Activated CD4-positive, alpha-beta T cell treated with anti-CD3 and anti-CD28 coated beads for 36 hours (primary cell): ENCODE measurements at regions of chr7 and their contacts with region 1.

Region 1: DNA sequence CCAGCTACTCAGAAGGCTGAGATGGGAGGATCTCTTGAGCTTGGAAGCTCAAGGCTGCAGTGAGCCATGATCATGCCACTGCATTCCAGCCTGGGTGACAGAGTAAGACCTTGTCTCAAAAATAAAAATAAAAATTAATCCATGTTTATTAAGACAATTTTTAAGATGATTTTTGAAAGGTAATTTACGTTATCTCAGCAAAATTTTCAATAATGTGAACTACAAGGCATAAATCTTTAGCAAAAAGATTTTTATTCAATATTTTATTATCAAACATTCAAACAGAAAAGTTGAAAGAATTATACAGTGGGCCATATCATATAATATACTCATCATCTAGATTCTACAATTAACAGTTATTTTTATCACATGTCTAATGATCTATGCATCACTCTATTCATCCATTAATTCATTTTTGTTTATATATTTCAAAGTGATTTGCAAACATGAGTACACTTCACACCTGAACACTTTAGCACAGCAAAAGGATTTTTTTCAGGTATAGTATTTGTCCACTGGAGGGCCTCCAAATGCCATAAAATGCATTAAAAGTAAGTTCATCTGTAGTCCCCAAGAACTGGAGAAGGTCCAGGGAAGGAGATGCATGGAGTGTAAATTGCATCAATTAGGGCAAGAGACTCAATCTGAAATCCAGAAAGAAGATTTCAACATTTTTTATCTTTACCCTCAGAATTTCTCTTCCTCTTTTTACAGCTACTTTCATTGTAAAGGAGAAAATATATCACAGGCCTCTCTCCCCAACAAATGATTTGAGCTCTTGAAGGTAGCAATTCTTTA is 38.6 kb upstream of the RSBN1L start:
- DNase-seq: no peak
- ATAC-seq: peak; percentile 63
- H3K4me3 Mint-ChIP-seq: no peak overlapping the region
- H3K27ac Mint-ChIP-seq: no peak overlapping the region
- H3K4me1 Mint-ChIP-seq: no peaks in the 10 kb centered on the region
- H3K27me3 Mint-ChIP-seq: no peaks in the 10 kb centered on the region

Region 2: GRCh38 chr7:77759294-77759889 is 101.8 kb after region 1 on chr7:
- CTCF ChIA-PET with region 1: interaction called, 70 read pairs
- POLR2A ChIA-PET with region 1: no interaction called
- intact Hi-C with region 1: loop called (anchors 1 kb)
- DNase-seq: peak; percentile 78
- ATAC-seq: peak; percentile 81
- H3K4me3 Mint-ChIP-seq: no peak overlapping the region
- H3K27ac Mint-ChIP-seq: no peak overlapping the region
- H3K4me1 Mint-ChIP-seq: peaks cover 31% of the 10 kb centered on the region
- H3K27me3 Mint-ChIP-seq: no peaks in the 10 kb centered on the region

Region 3: DNA sequence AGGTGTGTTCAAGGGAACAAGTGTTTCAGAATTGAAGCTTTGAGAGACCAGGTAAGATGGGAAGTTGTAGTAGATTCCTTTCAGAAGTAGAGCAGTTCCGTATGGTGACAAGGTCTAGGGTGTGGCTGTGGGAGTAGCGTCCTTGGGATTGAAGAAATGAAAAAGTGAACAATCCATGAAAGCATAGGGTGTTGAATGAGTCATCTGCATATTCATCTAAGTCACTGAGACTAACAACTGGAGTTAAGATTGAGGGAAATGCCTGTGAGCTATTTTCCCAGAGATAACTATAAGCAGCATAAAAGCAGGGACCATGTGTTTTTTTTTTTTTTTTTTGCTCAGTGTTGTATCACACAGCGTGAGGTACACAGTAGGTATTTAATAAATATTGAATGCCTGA is 275.8 kb after region 1 on chr7:
- CTCF ChIA-PET with region 1: interaction called, 3 read pairs
- POLR2A ChIA-PET with region 1: no interaction called
- intact Hi-C with region 1: loop called in 1 of 2 experiments (anchors 5 kb)
- DNase-seq: no peak
- ATAC-seq: peak; percentile 47
- H3K4me3 Mint-ChIP-seq: no peak overlapping the region
- H3K27ac Mint-ChIP-seq: no peak overlapping the region
- H3K4me1 Mint-ChIP-seq: peaks cover 11% of the 10 kb centered on the region
- H3K27me3 Mint-ChIP-seq: no peaks in the 10 kb centered on the region

Region 4: GRCh38 chr7:78039790-78040776 is 382.5 kb after region 1 on chr7:
- CTCF ChIA-PET with region 1: interaction called, 22 read pairs
- POLR2A ChIA-PET with region 1: no interaction called
- intact Hi-C with region 1: loop called (anchors 2 to 5 kb)
- DNase-seq: peak; percentile 72
- ATAC-seq: peak; percentile 92
- H3K4me3 Mint-ChIP-seq: no peak overlapping the region
- H3K27ac Mint-ChIP-seq: no peak overlapping the region
- H3K4me1 Mint-ChIP-seq: no peaks in the 10 kb centered on the region
- H3K27me3 Mint-ChIP-seq: peaks cover 18% of the 10 kb centered on the region

Region 5: DNA sequence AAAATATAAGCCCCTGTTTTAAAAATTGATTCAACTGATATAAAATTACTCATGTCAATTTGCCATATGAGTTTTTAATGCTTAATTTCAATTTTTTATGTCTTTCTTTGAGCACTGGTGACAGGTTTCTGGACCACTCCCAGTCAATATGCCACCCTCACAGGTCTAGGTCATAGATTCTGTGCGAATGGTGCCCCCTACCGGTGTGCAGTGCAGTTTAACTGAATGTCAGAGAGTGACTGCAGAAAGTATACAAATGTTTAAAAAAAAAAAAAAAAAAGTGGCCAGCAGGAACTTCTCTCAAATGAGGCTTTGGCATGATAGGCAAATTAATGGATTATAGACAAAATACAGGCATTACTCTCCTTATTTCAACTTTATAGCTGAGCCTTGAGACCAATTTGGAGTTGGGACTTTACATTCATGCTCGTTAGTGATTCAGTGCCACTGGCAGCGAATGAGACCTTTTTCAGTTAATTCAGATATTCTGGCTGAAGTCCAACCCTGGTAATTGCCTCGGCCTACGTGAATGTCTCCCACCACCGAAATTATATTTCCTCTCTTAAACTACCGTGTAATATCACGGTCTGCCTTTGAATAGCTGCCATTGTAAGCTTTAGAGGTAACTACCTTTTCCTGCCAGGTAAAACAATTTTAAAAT is 568.6 kb after region 1 on chr7:
- CTCF ChIA-PET with region 1: no interaction called
- POLR2A ChIA-PET with region 1: no interaction called
- intact Hi-C with region 1: loop called in 1 of 2 experiments (anchors 10 kb)
- DNase-seq: peak; percentile 70
- ATAC-seq: no peak
- H3K4me3 Mint-ChIP-seq: no peak overlapping the region
- H3K27ac Mint-ChIP-seq: no peak overlapping the region
- H3K4me1 Mint-ChIP-seq: no peaks in the 10 kb centered on the region
- H3K27me3 Mint-ChIP-seq: peaks cover 12% of the 10 kb centered on the region

Region 6: GRCh38 chr7:79176859-79177477 is 1519.3 kb after region 1 on chr7:
- CTCF ChIA-PET with region 1: no interaction called
- POLR2A ChIA-PET with region 1: no interaction called
- intact Hi-C with region 1: loop called in 1 of 2 experiments (anchors 10 kb)
- DNase-seq: no peak
- ATAC-seq: no peak
- H3K4me3 Mint-ChIP-seq: no peak overlapping the region
- H3K27ac Mint-ChIP-seq: no peak overlapping the region
- H3K4me1 Mint-ChIP-seq: no peaks in the 10 kb centered on the region
- H3K27me3 Mint-ChIP-seq: peaks cover 2% of the 10 kb centered on the region